ENCODE measurements at regions of chr12 and their contacts with region 1.

Region 1: GRCh38 chr12:120640840-120641833 is 711 bp downstream of the CABP1 start:
- DNase-seq: no peak
- H3K4me3 ChIP-seq: no peak overlapping the region
- CTCF ChIP-seq: no peak
- POLR2A ChIP-seq: no peak

Region 2: DNA sequence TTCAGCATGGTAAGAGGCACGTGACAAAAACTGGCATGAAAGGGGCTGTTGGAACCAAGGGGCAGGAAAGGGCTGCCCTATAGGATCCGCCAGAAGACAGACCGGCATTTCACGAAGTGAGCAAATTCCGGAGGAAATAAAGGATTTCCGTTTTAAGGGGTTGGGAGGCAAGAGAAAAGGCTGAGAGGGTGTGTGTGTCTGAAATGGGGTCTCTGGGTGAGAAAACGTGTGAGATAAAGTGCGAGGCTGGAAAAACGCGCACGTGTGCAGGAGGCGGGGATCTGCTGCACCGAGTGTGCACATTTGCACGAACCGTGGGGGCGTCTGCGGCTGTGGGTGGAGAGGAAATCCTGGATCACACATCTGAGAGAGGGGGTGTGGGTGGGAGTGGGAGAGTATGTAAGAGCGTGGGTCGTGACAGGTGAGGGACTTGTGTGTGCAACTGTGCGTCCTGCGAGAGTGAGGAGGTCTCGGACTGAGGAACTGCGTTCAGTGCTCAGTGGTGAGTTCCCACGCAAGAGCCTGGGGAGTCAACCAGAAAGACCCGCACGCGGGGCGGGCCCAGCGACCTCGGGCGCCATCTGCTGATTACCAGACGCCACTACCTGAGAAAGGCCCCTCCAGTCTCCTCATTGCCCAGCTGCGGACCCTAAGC is 454.5 kb after region 1 on chr12:
- intact Hi-C with region 1: loop called (anchors 10 kb)
- DNase-seq: peak; percentile 25 to 93
- H3K4me3 ChIP-seq: no peak overlapping the region
- CTCF ChIP-seq: no peak
- POLR2A ChIP-seq: no peak